ENCODE measurements at regions of chr12 and their contacts with region 1.

Region 1: DNA sequence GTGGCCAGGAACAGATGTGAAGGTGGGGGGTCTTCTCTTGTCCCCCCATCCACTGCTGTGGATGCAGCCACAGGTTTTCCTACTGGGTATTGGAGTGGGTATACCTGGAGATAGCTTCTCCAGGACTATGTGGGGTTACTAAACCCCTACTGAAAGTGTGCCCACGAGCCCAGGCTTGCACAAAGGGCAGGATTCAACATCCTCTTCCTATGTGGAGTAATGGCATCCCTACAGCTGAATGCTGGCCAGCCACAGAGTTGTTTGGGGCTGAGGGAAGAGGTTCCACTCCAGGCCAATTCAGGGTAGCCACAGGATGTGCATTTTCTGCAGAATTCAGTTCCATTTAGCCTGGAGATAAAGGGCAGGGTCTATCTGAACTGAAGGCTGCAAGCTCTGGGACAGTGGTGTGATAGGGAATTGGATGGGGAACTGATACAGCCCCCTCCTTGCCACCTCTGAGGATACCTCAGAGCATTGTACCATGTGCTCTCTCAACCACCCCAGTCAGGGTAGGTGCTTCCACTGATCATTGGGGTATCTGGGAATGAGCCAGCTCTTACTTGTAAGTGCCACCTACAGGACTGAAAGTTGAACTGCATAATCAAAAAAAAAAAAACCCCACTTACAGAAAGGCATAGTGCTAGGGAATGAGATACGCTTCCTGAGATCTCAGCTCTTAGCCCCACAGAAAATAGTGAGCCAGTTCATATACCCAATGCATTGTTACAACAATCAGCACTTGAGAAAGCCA is 187.1 kb downstream of the KITLG start:
- DNase-seq: peak; percentile 58
- H3K4me3 ChIP-seq: no peak overlapping the region
- H3K27ac ChIP-seq: no peak overlapping the region
- H3K4me1 ChIP-seq: no peaks in the 10 kb centered on the region
- H3K27me3 ChIP-seq: no peaks in the 10 kb centered on the region
- CTCF ChIP-seq: peak; percentile 63

Region 2: DNA sequence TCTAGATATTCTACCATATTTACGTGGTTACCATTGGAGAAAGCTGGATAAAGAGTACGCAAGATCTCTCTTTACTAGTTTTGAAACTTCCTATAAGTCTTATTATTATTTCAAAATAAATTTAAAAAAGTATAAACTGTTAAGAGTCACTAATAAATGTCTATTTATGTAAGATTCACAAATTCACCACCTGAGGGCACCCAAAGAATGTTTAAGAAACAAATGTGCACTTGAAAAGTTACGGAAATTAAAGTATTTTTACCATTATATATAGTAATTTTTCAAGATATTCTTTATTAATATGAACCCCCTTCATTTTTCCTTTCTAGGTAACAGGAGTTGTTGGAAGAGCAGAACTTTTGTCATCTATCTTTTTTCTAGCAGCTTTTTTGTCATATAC is 239.2 kb before region 1 on chr12:
- CTCF ChIA-PET with region 1: no interaction called
- POLR2A ChIA-PET with region 1: no interaction called
- intact Hi-C with region 1: loop called (anchors 5 kb)
- DNase-seq: peak; percentile 41
- H3K4me3 ChIP-seq: no peak overlapping the region
- H3K27ac ChIP-seq: no peak overlapping the region
- H3K4me1 ChIP-seq: no peaks in the 10 kb centered on the region
- H3K27me3 ChIP-seq: no peaks in the 10 kb centered on the region
- CTCF ChIP-seq: peak; percentile 56; the same call in 1 of the 2 replicates

Region 3: GRCh38 chr12:88970742-88971141 is 577.5 kb after region 1 on chr12:
- CTCF ChIA-PET with region 1: no interaction called
- POLR2A ChIA-PET with region 1: no interaction called
- intact Hi-C with region 1: loop called (anchors 10 kb)
- DNase-seq: no peak
- H3K4me3 ChIP-seq: no peak overlapping the region
- H3K27ac ChIP-seq: no peak overlapping the region
- H3K4me1 ChIP-seq: no peaks in the 10 kb centered on the region
- H3K27me3 ChIP-seq: no peaks in the 10 kb centered on the region
- CTCF ChIP-seq: no peak

Region 4: DNA sequence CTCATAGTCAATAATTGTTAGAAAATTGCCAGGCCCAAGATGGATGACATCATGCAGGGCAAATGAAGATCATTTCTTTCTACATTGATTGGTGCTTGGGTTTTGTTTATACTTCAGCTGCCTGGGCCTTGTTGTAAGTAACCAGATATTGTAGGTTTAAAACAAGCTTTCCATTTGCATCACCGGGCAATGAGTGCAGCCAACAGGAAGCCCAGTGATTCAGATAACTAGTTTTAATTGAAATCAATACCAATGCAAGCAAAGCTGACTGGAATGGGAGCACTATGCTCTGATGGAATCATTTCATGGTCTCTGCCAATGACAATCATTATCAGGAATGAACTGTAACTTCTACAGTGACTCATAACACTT is 679.8 kb after region 1 on chr12:
- CTCF ChIA-PET with region 1: no interaction called
- POLR2A ChIA-PET with region 1: no interaction called
- intact Hi-C with region 1: no loop called
- DNase-seq: no peak
- H3K4me3 ChIP-seq: no peak overlapping the region
- H3K27ac ChIP-seq: no peak overlapping the region
- H3K4me1 ChIP-seq: peaks cover 28% of the 10 kb centered on the region
- H3K27me3 ChIP-seq: no peaks in the 10 kb centered on the region
- CTCF ChIP-seq: no peak